Activated T-helper 1 cell treated with anti-CD3 and anti-CD28 coated beads, Interleukin-12 subunit alpha, Interleukin-12 subunit beta, Interleukin-2, Interleukin-4 antibody, amounts not matched to agents 30 ng/mL and 10 ng/mL and 1 ng/mL, durations not matched to agents 14 hours and 24 hours and 36 hours (primary cell): ENCODE measurements at regions of chr2 and their contacts with region 1.

Region 1: GRCh38 chr2:11778923-11779757 is 32.7 kb downstream of the LPIN1 start:
- DNase-seq: peak; percentile 75
- H3K4me3 Mint-ChIP-seq: peak overlapping the region; percentile 76
- H3K27ac Mint-ChIP-seq: peak overlapping the region; percentile 80
- H3K4me1 Mint-ChIP-seq: peaks cover 46% of the 10 kb centered on the region
- H3K27me3 Mint-ChIP-seq: no peaks in the 10 kb centered on the region

Region 2: DNA sequence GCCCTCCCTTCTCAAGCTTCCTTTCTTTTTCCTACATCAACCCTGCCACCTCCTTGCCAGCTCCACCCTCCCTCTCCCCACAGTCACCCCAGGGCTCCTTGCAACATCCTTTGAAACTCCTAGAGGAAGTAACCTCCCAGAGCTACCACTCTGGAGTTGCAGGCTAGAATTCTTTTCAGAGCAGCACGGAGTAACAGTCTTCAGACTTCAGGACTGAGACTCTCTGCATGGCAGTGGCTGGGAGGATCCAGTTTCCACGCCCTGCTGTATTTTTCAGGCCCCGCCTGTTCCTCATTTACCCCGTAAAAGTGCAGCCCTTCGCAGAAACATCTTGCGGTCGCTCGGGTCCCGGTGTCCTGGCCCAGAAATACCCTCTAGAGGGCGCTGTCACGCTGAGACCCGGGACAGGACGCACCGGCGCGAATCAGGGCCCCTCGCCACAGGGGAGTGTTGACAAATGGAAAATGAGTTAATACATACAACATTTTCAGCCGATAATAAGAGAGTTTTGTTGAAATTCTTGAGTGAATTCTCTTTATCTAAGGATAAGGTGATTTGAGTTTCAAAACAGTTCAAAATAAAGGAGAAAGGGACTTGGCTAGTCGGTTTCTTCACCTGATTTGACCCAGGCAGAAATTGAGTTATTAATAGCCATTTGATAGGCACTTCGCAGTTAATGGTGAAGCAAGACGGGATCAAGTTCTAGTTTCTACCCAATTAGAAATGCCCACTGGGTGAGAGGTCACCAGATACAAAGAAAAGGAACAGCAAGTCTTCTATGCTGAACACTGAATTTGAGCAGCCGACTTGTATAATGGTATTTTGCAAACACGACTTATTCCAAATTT is 90.7 kb before region 1 on chr2:
- intact Hi-C with region 1: loop called (anchors 1 kb)
- DNase-seq: peak; percentile 78
- H3K4me3 Mint-ChIP-seq: peak overlapping the region; percentile 37
- H3K27ac Mint-ChIP-seq: no peak overlapping the region
- H3K4me1 Mint-ChIP-seq: peaks cover 10% of the 10 kb centered on the region
- H3K27me3 Mint-ChIP-seq: peaks cover 26% of the 10 kb centered on the region

Region 3: GRCh38 chr2:11753886-11754699 is 25.0 kb before region 1 on chr2:
- intact Hi-C with region 1: loop called (anchors 1 kb)
- DNase-seq: peak; percentile 57
- H3K4me3 Mint-ChIP-seq: peak overlapping the region; percentile 69
- H3K27ac Mint-ChIP-seq: peak overlapping the region; percentile 82
- H3K4me1 Mint-ChIP-seq: peaks cover 85% of the 10 kb centered on the region
- H3K27me3 Mint-ChIP-seq: no peaks in the 10 kb centered on the region